ENCODE measurements at regions of chr3 and their contacts with region 1.

Region 1: DNA sequence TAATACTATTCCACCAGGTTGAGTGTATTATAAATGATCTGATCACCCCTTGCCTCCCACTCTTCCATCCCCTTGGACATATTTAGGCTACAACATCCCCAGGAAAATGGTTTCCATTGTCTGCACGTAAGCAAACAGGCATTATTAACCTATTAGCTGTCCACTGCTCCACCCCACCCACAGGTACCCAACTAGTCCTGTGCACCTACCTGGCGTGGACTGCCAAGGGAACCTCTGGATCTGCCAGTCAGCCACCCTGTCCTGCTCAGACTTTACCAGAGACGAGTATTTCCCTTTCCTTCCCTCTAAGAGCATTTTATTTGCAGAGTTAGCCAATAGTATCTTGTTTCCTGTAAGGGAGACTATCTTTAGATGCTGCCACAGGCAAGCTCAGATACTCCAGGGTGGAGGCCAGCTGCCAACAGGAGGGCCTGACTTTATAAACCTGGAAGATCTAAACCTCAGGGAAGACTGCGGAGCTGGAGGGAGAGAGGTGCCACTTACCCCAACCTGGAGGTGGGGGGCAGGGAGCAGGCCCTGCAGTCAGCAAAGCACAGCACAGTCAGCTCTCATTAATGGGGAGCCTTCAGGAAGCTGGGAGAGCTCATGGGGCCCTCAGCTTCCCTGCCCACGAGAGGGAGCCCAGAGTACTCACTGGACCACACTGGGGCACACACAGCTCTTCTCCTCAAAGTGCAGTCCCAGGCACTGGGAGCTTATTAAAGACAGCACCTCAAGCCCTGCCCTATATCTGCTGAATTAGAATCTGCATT is at the start of gene CX3CR1:
- DNase-seq: peak; percentile 61 to 77
- ATAC-seq: peak; percentile 94 to 96
- H3K4me3 ChIP-seq: peak within 1 kb of the TSS in 1 of 4 donors; percentile 7
- H3K27ac ChIP-seq: peak within 1 kb of the TSS; percentile 74 to 81 (median 77)
- H3K4me1 ChIP-seq: peaks cover 25 to 28% of the 10 kb centered on the region in 2 donors
- H3K27me3 ChIP-seq: no peaks in the 10 kb centered on the region
- CTCF ChIP-seq: no peak
- POLR2A ChIP-seq: no peak
- total RNA-seq, gene CX3CR1: 0.25 to 0.49 (median 0.35) TPM

Region 2: GRCh38 chr3:38601956-38602550 is 677.9 kb before region 1 on chr3:
- in situ Hi-C with region 1: no loop called
- intact Hi-C with region 1: no loop called
- DNase-seq: no peak
- ATAC-seq: no peak
- H3K4me3 ChIP-seq: no peak overlapping the region
- H3K27ac ChIP-seq: no peak overlapping the region
- H3K4me1 ChIP-seq: no peaks in the 10 kb centered on the region
- H3K27me3 ChIP-seq: no peaks in the 10 kb centered on the region
- CTCF ChIP-seq: no peak
- POLR2A ChIP-seq: no peak

Region 3: GRCh38 chr3:39000008-39000450 is 279.9 kb before region 1 on chr3:
- in situ Hi-C with region 1: no loop called
- intact Hi-C with region 1: no loop called
- DNase-seq: no peak
- ATAC-seq: no peak
- H3K4me3 ChIP-seq: no peak overlapping the region
- H3K27ac ChIP-seq: no peak overlapping the region
- H3K4me1 ChIP-seq: no peaks in the 10 kb centered on the region
- H3K27me3 ChIP-seq: no peaks in the 10 kb centered on the region
- CTCF ChIP-seq: peak in 3 of 5 experiments; percentile 18 to 43 (median 34)
- POLR2A ChIP-seq: no peak

Region 4: GRCh38 chr3:39126532-39127071 is 153.3 kb before region 1 on chr3:
- in situ Hi-C with region 1: loop called in 3 of 4 experiments (anchors 5 to 10 kb)
- intact Hi-C with region 1: no loop called
- DNase-seq: no peak
- ATAC-seq: peak; percentile 63 to 77
- H3K4me3 ChIP-seq: no peak overlapping the region
- H3K27ac ChIP-seq: no peak overlapping the region
- H3K4me1 ChIP-seq: no peaks in the 10 kb centered on the region
- H3K27me3 ChIP-seq: no peaks in the 10 kb centered on the region
- CTCF ChIP-seq: peak; percentile 55 to 75 (median 64)
- POLR2A ChIP-seq: no peak

Region 5: GRCh38 chr3:39332525-39332924 is 52.6 kb after region 1 on chr3:
- in situ Hi-C with region 1: no loop called
- intact Hi-C with region 1: no loop called
- DNase-seq: no peak
- ATAC-seq: no peak
- H3K4me3 ChIP-seq: no peak overlapping the region
- H3K27ac ChIP-seq: no peak overlapping the region
- H3K4me1 ChIP-seq: no peaks in the 10 kb centered on the region
- H3K27me3 ChIP-seq: no peaks in the 10 kb centered on the region
- CTCF ChIP-seq: no peak
- POLR2A ChIP-seq: no peak

Measured in gastrocnemius medialis (tissue), 4 donors.